Vagina (tissue), 2 donors: ENCODE measurements at regions of chr4 and their contacts with region 1.

Region 1: DNA sequence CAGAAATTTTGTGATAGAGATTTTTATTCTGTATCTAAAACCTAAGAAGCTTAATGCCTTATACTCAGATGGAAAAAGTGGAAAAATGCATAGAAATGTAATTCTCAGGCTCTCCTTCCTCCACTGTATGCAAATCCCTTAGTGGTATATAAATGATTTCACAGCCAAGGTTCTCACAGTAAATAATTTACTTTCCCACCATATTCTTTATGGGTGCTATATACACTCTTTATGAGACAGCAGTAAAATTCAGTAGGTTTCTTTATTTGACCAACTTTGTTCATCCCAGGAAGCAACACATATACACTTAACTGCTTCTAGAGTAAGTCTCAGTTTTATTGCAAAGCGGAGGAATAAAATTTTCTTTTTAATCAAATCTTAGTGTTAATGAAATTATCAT is 1399.7 kb downstream of the PCDH7 start:
- DNase-seq: no peak
- H3K4me3 ChIP-seq: no peak overlapping the region
- H3K27ac ChIP-seq: no peak overlapping the region
- H3K4me1 ChIP-seq: no peaks in the 10 kb centered on the region
- H3K27me3 ChIP-seq: no peaks in the 10 kb centered on the region
- CTCF ChIP-seq: no peak
- POLR2A ChIP-seq: no peak

Region 2: GRCh38 chr4:30553706-30554105 is 1566.2 kb before region 1 on chr4:
- intact Hi-C with region 1: loop called (anchors 5 kb)
- DNase-seq: no peak
- H3K4me3 ChIP-seq: no peak overlapping the region
- H3K27ac ChIP-seq: no peak overlapping the region
- H3K4me1 ChIP-seq: no peaks in the 10 kb centered on the region
- H3K27me3 ChIP-seq: no peaks in the 10 kb centered on the region
- CTCF ChIP-seq: no peak
- POLR2A ChIP-seq: no peak

Region 3: GRCh38 chr4:32061916-32062315 is 58.0 kb before region 1 on chr4:
- intact Hi-C with region 1: no loop called
- DNase-seq: no peak
- H3K4me3 ChIP-seq: no peak overlapping the region
- H3K27ac ChIP-seq: no peak overlapping the region
- H3K4me1 ChIP-seq: no peaks in the 10 kb centered on the region
- H3K27me3 ChIP-seq: no peaks in the 10 kb centered on the region
- CTCF ChIP-seq: no peak
- POLR2A ChIP-seq: no peak